PC-9 (cell line): ENCODE measurements at regions of chr12 and their contacts with region 1.

Region 1: DNA sequence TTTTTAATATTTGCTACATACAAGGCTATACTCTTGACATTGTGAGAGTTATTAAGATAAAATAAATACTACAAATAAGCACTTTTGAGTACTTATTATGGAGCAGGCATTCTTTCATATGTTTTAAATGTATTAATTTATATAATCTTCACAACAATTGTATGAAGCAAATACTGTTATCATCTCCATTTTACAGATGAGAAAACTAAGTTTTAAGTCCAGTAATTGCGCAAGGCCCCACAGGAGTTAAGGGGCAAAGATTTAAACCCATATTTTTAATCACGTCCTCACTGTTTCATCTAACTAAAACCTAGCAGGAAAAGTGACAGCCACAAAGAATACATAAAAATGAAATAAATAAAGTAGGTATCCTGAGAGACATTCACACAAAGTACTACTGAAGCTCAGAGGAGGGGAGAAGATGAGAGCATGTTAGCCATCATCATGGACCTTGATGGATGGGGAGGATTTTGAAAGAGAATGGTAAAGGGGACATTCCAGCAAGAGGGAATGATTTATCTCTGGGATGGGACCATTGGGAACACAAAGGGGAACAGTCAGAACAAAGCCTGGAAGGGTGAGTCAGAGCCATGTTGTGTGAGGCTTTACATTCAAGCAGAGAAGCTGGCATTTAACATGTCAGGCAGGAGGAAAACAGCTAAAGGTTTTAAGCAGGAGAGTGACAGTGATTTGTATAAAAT is 174.8 kb downstream of the SYT10 start:
- DNase-seq: no peak
- H3K4me3 ChIP-seq: no peak overlapping the region
- H3K27ac ChIP-seq: no peak overlapping the region
- H3K4me1 ChIP-seq: no peaks in the 10 kb centered on the region
- H3K27me3 ChIP-seq: no peaks in the 10 kb centered on the region
- CTCF ChIP-seq: no peak

Region 2: GRCh38 chr12:32522331-32523221 is 742.3 kb before region 1 on chr12:
- CTCF ChIA-PET with region 1: no interaction called
- POLR2A ChIA-PET with region 1: no interaction called
- intact Hi-C with region 1: no loop called
- DNase-seq: no peak
- H3K4me3 ChIP-seq: no peak overlapping the region
- H3K27ac ChIP-seq: no peak overlapping the region
- H3K4me1 ChIP-seq: no peaks in the 10 kb centered on the region
- H3K27me3 ChIP-seq: no peaks in the 10 kb centered on the region
- CTCF ChIP-seq: no peak

Region 3: GRCh38 chr12:32765906-32766305 is 498.9 kb before region 1 on chr12:
- CTCF ChIA-PET with region 1: no interaction called
- POLR2A ChIA-PET with region 1: interaction called, 11 read pairs
- intact Hi-C with region 1: no loop called
- DNase-seq: no peak
- H3K4me3 ChIP-seq: no peak overlapping the region
- H3K27ac ChIP-seq: no peak overlapping the region
- H3K4me1 ChIP-seq: no peaks in the 10 kb centered on the region
- H3K27me3 ChIP-seq: no peaks in the 10 kb centered on the region
- CTCF ChIP-seq: no peak